Transverse colon (tissue), 4 donors: ENCODE measurements at regions of chr10 and their contacts with region 1.

Region 1: GRCh38 chr10:50636618-50637579 is 13.1 kb upstream of the SGMS1 start:
- DNase-seq: no peak
- H3K4me3 ChIP-seq: no peak overlapping the region
- H3K27ac ChIP-seq: no peak overlapping the region
- H3K4me1 ChIP-seq: peaks cover 0 to 4% (median 0%) of the 10 kb centered on the region in 4 donors
- H3K27me3 ChIP-seq: no peaks in the 10 kb centered on the region
- CTCF ChIP-seq: no peak
- EP300 ChIP-seq: no peak
- POLR2A ChIP-seq: no peak

Region 2: DNA sequence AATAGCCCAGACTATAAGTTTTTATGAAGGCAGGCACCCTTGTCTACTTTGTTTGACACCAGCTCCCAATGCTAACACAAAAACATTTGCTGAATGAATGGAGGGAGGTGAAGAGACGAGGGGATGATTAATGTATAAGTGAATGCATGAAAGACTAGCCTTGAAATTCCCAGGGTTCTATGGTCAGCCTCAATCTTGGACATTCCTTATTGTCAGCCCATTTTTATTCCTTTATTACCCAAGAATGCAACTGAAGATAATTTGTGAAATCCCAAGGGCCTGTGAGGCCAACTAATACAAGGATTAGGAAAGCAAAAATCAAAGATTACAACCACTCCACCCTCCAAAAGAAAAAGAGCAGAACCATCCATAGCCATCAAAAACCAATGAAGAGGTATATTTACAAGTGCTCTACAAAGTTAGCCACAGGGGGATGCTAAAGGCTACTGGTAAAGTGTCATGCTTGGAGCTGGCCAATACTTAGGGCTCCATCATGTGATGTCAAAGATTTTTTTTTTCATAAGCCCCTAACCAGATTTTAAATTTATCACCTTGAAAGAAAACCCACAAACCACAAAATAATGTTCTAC is 345.5 kb before region 1 on chr10:
- in situ Hi-C with region 1: no loop called
- intact Hi-C with region 1: loop called (anchors 10 kb)
- DNase-seq: no peak
- H3K4me3 ChIP-seq: no peak overlapping the region
- H3K27ac ChIP-seq: no peak overlapping the region
- H3K4me1 ChIP-seq: peaks cover 0 to 3% (median 0%) of the 10 kb centered on the region in 4 donors
- H3K27me3 ChIP-seq: no peaks in the 10 kb centered on the region
- CTCF ChIP-seq: peak in 3 of 5 experiments; percentile 16 to 17 (median 16)
- EP300 ChIP-seq: no peak
- POLR2A ChIP-seq: no peak

Region 3: GRCh38 chr10:51103554-51104217 is 466.8 kb after region 1 on chr10:
- in situ Hi-C with region 1: no loop called
- intact Hi-C with region 1: no loop called
- DNase-seq: no peak
- H3K4me3 ChIP-seq: no peak overlapping the region
- H3K27ac ChIP-seq: no peak overlapping the region
- H3K4me1 ChIP-seq: no peaks in the 10 kb centered on the region
- H3K27me3 ChIP-seq: no peaks in the 10 kb centered on the region
- CTCF ChIP-seq: no peak
- EP300 ChIP-seq: no peak
- POLR2A ChIP-seq: no peak